CD4-positive, alpha-beta memory T cell (primary cell): ENCODE measurements at regions of chr5 and their contacts with region 1.

Region 1: GRCh38 chr5:149561848-149562247 is 10.6 kb upstream of the CSNK1A1 start:
- DNase-seq: no peak
- H3K4me3 ChIP-seq: no peak overlapping the region
- H3K4me3 Mint-ChIP-seq: peak overlapping the region in 2 of 8 donors; percentile 61 to 66
- H3K27ac ChIP-seq: no peak overlapping the region
- H3K27ac Mint-ChIP-seq: no peak overlapping the region
- H3K4me1 ChIP-seq: peaks cover 8% of the 10 kb centered on the region
- H3K4me1 Mint-ChIP-seq: peaks cover 8 to 16% (median 11%) of the 10 kb centered on the region in 4 donors
- H3K27me3 ChIP-seq: no peaks in the 10 kb centered on the region
- H3K27me3 Mint-ChIP-seq: no peaks in the 10 kb centered on the region

Region 2: DNA sequence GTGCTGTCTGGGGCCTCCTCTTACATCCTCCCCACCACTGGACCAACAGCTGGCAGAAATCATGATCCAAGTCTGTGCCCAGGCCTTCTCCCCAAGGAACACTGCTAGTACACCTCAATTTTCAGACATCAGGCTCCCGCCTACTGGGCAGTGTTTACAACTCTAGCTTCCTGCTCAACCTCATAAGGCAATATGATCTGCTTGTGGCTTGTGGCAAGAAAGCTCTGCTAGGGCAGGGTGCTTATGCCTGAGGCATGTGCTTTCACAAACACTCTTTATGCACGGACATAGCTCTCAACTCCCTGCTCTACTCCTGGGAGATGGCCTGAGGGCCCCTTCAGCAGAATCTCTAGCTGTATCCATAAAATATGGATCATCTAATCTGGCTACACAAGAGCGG is 531.5 kb before region 1 on chr5:
- CTCF ChIA-PET with region 1: no interaction called
- POLR2A ChIA-PET with region 1: no interaction called
- intact Hi-C with region 1: no loop called
- DNase-seq: no peak
- H3K4me3 ChIP-seq: no peak overlapping the region
- H3K4me3 Mint-ChIP-seq: no peak overlapping the region
- H3K27ac ChIP-seq: no peak overlapping the region
- H3K27ac Mint-ChIP-seq: no peak overlapping the region
- H3K4me1 ChIP-seq: peaks cover under 1% of the 10 kb centered on the region
- H3K4me1 Mint-ChIP-seq: peaks cover 0 to 12% (median 3%) of the 10 kb centered on the region in 4 donors
- H3K27me3 ChIP-seq: no peaks in the 10 kb centered on the region
- H3K27me3 Mint-ChIP-seq: no peaks in the 10 kb centered on the region

Region 3: DNA sequence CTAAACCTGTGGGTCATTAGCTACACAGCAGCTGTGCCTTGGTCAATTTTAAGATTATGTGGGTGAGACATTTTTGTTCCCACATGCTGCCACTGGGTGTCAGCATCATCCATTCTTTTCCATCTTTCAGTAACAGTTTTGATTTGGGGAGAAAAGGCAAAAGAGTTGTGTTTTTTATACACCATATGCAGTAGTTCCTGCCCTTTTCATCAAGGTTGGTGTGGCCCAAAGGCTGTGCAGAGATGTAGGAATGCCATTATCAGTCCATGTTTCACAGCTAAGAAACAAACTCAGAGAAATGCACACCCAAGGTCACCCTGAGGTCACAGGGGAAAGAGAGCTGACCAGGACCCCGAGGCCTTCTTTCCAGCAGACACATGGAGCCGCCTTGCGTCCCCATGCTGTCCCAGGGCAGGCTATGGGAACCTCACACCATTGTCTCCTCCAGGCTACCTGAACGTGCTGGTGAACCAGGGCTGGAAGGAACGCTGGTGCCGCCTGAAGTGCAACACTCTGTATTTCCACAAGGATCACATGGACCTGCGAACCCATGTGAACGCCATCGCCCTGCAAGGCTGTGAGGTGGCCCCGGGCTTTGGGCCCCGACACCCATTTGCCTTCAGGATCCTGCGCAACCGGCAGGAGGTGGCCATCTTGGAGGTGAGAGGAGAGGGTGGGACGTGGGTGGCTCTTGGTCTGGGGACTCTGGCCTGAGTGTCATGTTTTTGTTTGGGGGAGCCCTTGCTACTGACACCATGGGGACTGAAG is 244.4 kb before region 1 on chr5:
- CTCF ChIA-PET with region 1: interaction called, 7 read pairs
- POLR2A ChIA-PET with region 1: no interaction called
- intact Hi-C with region 1: loop called (anchors 1 kb)
- DNase-seq: peak in 4 of 5 donors; percentile 52 to 66 (median 56)
- H3K4me3 ChIP-seq: no peak overlapping the region
- H3K4me3 Mint-ChIP-seq: no peak overlapping the region
- H3K27ac ChIP-seq: no peak overlapping the region
- H3K27ac Mint-ChIP-seq: no peak overlapping the region
- H3K4me1 ChIP-seq: no peaks in the 10 kb centered on the region
- H3K4me1 Mint-ChIP-seq: peaks cover 0 to 3% (median 1%) of the 10 kb centered on the region in 4 donors
- H3K27me3 ChIP-seq: no peaks in the 10 kb centered on the region
- H3K27me3 Mint-ChIP-seq: no peaks in the 10 kb centered on the region

Region 4: GRCh38 chr5:149387081-149387631 is 174.7 kb before region 1 on chr5:
- CTCF ChIA-PET with region 1: interaction called, 84 read pairs
- POLR2A ChIA-PET with region 1: interaction called, 3 read pairs
- intact Hi-C with region 1: loop called (anchors 1 kb)
- DNase-seq: no peak
- H3K4me3 ChIP-seq: no peak overlapping the region
- H3K4me3 Mint-ChIP-seq: no peak overlapping the region
- H3K27ac ChIP-seq: no peak overlapping the region
- H3K27ac Mint-ChIP-seq: no peak overlapping the region
- H3K4me1 ChIP-seq: no peaks in the 10 kb centered on the region
- H3K4me1 Mint-ChIP-seq: no peaks in the 10 kb centered on the region
- H3K27me3 ChIP-seq: no peaks in the 10 kb centered on the region
- H3K27me3 Mint-ChIP-seq: peaks cover 0 to 1% of the 10 kb centered on the region in 2 donors

Region 5: GRCh38 chr5:149442563-149443182 is 119.2 kb before region 1 on chr5:
- CTCF ChIA-PET with region 1: interaction called, 68 read pairs
- POLR2A ChIA-PET with region 1: no interaction called
- intact Hi-C with region 1: loop called (anchors 1 kb)
- DNase-seq: peak; percentile 45 to 53 (median 48)
- H3K4me3 ChIP-seq: no peak overlapping the region
- H3K4me3 Mint-ChIP-seq: no peak overlapping the region
- H3K27ac ChIP-seq: no peak overlapping the region
- H3K27ac Mint-ChIP-seq: peak overlapping the region in 1 of 7 donors; percentile 73
- H3K4me1 ChIP-seq: peaks cover 10% of the 10 kb centered on the region
- H3K4me1 Mint-ChIP-seq: peaks cover 8 to 14% (median 11%) of the 10 kb centered on the region in 4 donors
- H3K27me3 ChIP-seq: no peaks in the 10 kb centered on the region
- H3K27me3 Mint-ChIP-seq: no peaks in the 10 kb centered on the region